CD8-positive, alpha-beta memory T cell (primary cell): ENCODE measurements at regions of chr20 and their contacts with region 1.

Region 1: GRCh38 chr20:48828022-48828743 is 384 bp upstream of the PREX1 start:
- DNase-seq: peak; percentile 82 to 90 (median 87)
- H3K4me3 ChIP-seq: no peak overlapping the region
- H3K4me3 Mint-ChIP-seq: peak overlapping the region; percentile 82 to 92 (median 90)
- H3K27ac ChIP-seq: peak overlapping the region; percentile 59
- H3K27ac Mint-ChIP-seq: peak overlapping the region; percentile 8 to 97 (median 92)
- H3K4me1 ChIP-seq: peaks cover 20% of the 10 kb centered on the region
- H3K4me1 Mint-ChIP-seq: peaks cover 5 to 33% (median 29%) of the 10 kb centered on the region in 3 donors
- H3K27me3 ChIP-seq: no peaks in the 10 kb centered on the region
- H3K27me3 Mint-ChIP-seq: no peaks in the 10 kb centered on the region

Region 2: DNA sequence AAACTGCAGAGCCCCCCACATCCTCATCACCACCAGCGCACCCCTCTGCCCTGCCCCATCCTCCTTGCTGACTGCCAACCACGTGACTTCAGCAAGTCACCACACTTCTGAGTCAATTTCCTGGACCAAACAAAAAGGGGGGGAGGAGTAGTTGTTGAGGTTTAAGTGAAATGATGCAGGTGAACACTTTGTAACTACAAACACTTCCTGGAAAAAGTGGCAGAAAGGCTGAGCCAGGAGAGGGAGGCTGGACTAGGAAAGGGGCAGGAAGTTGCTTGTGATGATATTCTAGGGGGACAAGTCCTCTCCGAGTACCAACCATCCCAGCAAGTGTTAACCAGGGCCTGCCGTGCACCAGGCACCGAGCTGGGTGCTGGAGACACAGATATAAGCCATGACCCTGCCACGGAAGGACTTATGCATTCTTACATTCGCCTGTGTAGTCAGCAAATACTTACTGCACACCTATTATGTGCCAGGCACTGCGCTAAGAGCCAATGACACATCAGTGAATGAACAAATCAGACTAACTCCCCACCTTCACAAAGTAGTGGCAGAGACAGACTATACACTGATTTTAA is 67.7 kb before region 1 on chr20:
- CTCF ChIA-PET with region 1: interaction called, 14 read pairs
- POLR2A ChIA-PET with region 1: interaction called, 7 read pairs
- DNase-seq: peak; percentile 65 to 91 (median 86)
- H3K4me3 ChIP-seq: peak overlapping the region; percentile 3
- H3K4me3 Mint-ChIP-seq: peak overlapping the region; percentile 73 to 92 (median 82)
- H3K27ac ChIP-seq: peak overlapping the region; percentile 64
- H3K27ac Mint-ChIP-seq: peak overlapping the region; percentile 96 to 98 (median 96)
- H3K4me1 ChIP-seq: peaks cover 82% of the 10 kb centered on the region
- H3K4me1 Mint-ChIP-seq: peaks cover 92 to 97% (median 97%) of the 10 kb centered on the region in 3 donors
- H3K27me3 ChIP-seq: no peaks in the 10 kb centered on the region
- H3K27me3 Mint-ChIP-seq: peaks cover 0 to 2% of the 10 kb centered on the region in 2 donors

Region 3: DNA sequence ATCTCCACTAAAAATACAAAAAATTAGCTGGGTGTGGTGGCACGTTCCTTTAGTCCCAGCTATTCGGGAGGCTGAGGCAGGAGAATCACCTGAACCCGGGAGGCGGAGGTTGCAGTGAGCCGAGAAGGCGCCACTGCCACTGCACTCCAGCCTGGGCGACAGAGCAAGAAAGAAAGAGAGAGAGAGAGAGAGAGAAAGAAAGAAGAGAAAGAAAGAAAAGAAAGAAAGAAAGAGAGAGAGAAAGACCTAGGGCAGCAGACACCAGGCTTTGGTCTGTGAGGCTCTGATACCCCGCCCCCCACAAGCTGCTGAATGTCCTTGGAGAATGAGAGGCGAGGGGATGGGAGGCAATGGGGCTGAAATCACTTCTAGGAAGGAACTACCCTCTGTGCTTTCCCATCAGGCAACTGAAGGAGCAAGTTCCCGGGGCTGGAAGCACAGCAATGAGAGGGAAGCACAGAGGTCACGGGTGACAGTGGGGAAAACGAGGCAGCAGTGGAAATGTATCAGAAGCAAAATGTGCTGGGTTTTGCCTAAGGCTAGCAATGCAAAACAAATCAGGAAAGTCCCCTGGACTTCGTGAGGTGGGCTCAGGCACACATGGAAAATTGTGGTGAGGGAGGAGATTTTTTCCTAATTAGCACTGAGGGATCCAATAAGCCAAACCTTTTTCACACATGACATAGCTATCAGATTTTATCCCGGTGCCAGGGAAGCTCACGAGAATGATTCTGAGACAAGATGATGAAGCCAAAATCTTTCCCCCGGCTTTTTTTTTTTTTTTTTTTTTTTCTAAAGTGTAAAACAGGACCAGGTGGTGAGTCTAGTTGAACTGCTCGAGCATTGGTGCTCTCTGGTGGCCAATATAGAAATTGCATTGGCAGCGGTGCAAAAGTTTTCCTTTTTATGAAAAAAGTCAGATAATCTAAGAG is 76.4 kb after region 1 on chr20:
- CTCF ChIA-PET with region 1: interaction called, 10 read pairs
- POLR2A ChIA-PET with region 1: no interaction called
- DNase-seq: peak; percentile 42 to 76 (median 55)
- H3K4me3 ChIP-seq: no peak overlapping the region
- H3K4me3 Mint-ChIP-seq: peak overlapping the region in 1 of 7 donors; percentile 81
- H3K27ac ChIP-seq: no peak overlapping the region
- H3K27ac Mint-ChIP-seq: peak overlapping the region in 1 of 8 donors; percentile 14
- H3K4me1 ChIP-seq: no peaks in the 10 kb centered on the region
- H3K4me1 Mint-ChIP-seq: peaks cover 7 to 12% (median 10%) of the 10 kb centered on the region in 3 donors
- H3K27me3 ChIP-seq: no peaks in the 10 kb centered on the region
- H3K27me3 Mint-ChIP-seq: peaks cover 0 to 1% of the 10 kb centered on the region in 2 donors